PC-9 (cell line): ENCODE measurements at regions of chr5 and their contacts with region 1.

Region 1: DNA sequence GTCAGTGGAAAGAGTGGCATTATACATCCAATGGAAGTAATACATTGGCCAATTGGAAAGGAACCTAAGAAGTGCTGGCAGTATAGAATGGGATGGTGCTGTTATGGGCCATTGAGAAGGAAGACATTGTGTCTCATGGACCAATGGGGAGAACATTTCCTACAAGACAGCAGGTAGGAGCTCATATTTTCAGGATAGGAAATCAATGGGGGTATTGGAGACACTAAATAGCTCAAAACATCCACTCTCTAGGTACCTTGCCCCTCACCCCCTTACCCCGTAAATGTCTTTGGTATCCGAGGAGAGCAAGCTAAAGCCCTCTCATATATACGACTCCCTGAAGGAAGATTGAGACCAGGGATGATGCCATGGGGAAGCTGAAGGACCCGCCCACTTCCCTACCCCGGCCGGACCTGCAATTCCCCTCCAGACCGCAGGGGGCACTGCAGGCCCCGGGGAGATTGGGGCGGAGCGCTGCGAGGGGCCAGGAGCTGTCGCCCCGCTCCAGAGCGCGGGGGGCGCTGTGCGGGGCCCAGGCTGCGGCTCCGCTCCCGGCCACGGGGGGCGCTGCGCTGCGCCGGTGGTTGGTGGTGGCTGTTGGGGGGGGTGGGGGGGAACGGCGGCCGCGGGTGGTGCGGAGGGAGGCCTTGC is at the start of gene KDM3B:
- DNase-seq: peak; percentile 68 to 98
- H3K4me3 ChIP-seq: peak within 1 kb of the TSS; percentile 79
- H3K27ac ChIP-seq: peak within 1 kb of the TSS; percentile 71
- H3K4me1 ChIP-seq: peaks cover 22% of the 10 kb centered on the region
- H3K27me3 ChIP-seq: no peaks in the 10 kb centered on the region
- CTCF ChIP-seq: peak; percentile 96
- total RNA-seq, gene KDM3B: 75.0 and 76.7 TPM in 2 replicates

Region 2: DNA sequence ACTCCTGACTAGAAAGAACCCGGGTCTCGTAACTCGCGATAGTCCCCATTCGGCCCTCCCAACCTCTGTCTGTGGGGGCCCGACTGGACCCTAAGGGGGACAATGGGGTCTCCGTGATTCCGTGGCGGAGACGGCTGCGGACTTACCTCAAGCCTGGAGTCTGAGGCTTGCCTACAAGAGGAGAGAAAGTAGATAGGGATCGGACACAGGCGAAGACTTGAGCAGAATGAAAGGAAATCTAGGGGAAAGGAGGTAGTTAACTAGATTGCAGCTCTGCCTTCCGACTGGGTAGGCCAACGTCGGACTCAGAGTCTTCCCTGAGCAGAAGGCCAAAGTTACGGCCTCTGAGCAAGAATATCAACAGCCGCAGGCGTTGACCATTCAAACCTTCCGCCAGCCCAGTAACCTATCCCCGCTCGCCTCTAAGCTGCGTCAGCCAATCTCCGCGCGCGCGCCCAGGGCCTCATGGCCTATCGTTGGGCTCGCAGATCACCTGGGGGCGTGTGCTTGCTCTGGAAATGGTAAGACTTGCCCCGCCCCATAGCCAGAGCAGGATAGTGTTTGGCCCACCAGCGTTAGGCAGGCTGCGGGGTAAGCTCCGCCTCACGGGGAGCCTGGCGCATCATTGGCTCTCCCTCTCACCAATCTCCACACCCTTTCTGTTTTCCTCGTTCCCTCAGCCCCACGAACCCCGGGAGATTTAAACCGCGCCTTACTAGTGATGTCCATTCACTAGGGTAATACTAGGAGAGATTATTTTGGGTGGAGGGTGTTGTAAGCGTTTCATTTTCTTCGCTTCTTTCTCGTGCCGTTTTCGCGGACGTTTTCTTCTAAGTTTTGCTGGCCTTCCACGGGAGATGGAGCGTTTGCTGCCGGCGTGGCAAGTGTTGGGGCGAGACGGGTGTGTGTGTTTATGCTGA is 20.5 kb before region 1 on chr5 and contains the start of gene CDC25C:
- CTCF ChIA-PET with region 1: interaction called, 17 read pairs
- POLR2A ChIA-PET with region 1: interaction called, 8 read pairs
- intact Hi-C with region 1: no loop called
- DNase-seq: peak; percentile 98 to 99
- H3K4me3 ChIP-seq: peak within 1 kb of the TSS; percentile 82
- H3K27ac ChIP-seq: peak within 1 kb of the TSS; percentile 50; the same call in 1 of the 2 replicates
- H3K4me1 ChIP-seq: peaks cover 15% of the 10 kb centered on the region; the same call in 1 of the 2 replicates
- H3K27me3 ChIP-seq: no peaks in the 10 kb centered on the region
- CTCF ChIP-seq: no peak
- total RNA-seq, gene CDC25C: 36.2 and 39.5 TPM in 2 replicates

Region 3: DNA sequence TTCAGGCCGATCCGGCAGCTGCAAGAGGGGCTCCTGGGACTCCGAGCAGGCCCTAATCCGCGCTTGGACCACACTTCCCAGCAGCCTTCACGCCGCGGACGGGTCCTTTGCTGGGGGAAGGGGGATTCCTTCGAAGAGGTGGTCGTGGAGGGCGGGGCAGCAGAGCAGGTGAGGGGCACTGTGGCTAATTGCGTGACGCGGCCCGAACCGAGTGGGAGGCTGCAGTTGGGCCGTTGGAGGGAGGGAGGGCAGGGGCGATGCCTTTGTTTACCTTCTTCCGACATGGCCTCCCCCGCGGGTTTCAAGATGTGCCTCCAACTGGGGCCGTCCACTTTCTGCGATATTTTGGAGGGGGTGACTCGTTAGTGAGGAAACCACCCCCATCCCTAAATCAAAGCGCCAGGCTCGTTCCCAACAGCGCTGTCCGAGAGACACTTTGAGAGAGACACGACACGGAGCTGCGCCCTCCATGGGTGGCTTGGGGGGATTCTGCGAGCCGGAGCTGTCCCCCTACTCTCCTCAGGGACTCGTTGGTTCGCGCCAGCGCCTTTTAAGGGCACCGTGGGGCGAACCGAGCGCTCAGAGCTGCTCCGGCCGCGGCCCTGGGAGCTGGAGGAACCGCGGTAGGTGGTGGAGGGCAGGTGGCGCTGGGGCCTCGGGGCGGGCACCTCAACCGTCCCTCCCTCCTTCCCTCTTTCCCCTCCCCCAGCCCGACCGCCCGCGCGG is 14.3 kb before region 1 on chr5 and contains the start of gene FAM53C:
- CTCF ChIA-PET with region 1: interaction called, 6 read pairs
- POLR2A ChIA-PET with region 1: interaction called, 14 read pairs
- intact Hi-C with region 1: loop called (anchors 1 kb)
- DNase-seq: peak; percentile 73 to 98
- H3K4me3 ChIP-seq: peak within 1 kb of the TSS; percentile 60
- H3K27ac ChIP-seq: peak within 1 kb of the TSS; percentile 90
- H3K4me1 ChIP-seq: peaks cover 9% of the 10 kb centered on the region
- H3K27me3 ChIP-seq: no peaks in the 10 kb centered on the region
- CTCF ChIP-seq: no peak
- total RNA-seq, gene FAM53C: 46.6 and 65.1 TPM in 2 replicates

Region 4: GRCh38 chr5:138704249-138704648 is 352.1 kb after region 1 on chr5:
- CTCF ChIA-PET with region 1: interaction called, 17 read pairs
- POLR2A ChIA-PET with region 1: no interaction called
- intact Hi-C with region 1: no loop called
- DNase-seq: no peak
- H3K4me3 ChIP-seq: no peak overlapping the region
- H3K27ac ChIP-seq: no peak overlapping the region
- H3K4me1 ChIP-seq: peaks cover 12% of the 10 kb centered on the region
- H3K27me3 ChIP-seq: no peaks in the 10 kb centered on the region
- CTCF ChIP-seq: no peak

Region 5: GRCh38 chr5:139232147-139232724 is 880.0 kb after region 1 on chr5:
- CTCF ChIA-PET with region 1: interaction called, 24 read pairs
- POLR2A ChIA-PET with region 1: no interaction called
- intact Hi-C with region 1: no loop called
- DNase-seq: no peak
- H3K4me3 ChIP-seq: no peak overlapping the region
- H3K27ac ChIP-seq: no peak overlapping the region
- H3K4me1 ChIP-seq: no peaks in the 10 kb centered on the region
- H3K27me3 ChIP-seq: no peaks in the 10 kb centered on the region
- CTCF ChIP-seq: no peak